Esophagus squamous epithelium (tissue), 5 donors: ENCODE measurements at regions of chr6 and their contacts with region 1.

Region 1: GRCh38 chr6:159013229-159013628 is 13.2 kb upstream of the RSPH3 start:
- DNase-seq: no peak
- H3K4me3 ChIP-seq: no peak overlapping the region
- H3K27ac ChIP-seq: no peak overlapping the region
- H3K4me1 ChIP-seq: peaks cover 0 to 14% (median 3%) of the 10 kb centered on the region in 3 donors
- H3K27me3 ChIP-seq: no peaks in the 10 kb centered on the region
- CTCF ChIP-seq: no peak
- POLR2A ChIP-seq: no peak

Region 2: DNA sequence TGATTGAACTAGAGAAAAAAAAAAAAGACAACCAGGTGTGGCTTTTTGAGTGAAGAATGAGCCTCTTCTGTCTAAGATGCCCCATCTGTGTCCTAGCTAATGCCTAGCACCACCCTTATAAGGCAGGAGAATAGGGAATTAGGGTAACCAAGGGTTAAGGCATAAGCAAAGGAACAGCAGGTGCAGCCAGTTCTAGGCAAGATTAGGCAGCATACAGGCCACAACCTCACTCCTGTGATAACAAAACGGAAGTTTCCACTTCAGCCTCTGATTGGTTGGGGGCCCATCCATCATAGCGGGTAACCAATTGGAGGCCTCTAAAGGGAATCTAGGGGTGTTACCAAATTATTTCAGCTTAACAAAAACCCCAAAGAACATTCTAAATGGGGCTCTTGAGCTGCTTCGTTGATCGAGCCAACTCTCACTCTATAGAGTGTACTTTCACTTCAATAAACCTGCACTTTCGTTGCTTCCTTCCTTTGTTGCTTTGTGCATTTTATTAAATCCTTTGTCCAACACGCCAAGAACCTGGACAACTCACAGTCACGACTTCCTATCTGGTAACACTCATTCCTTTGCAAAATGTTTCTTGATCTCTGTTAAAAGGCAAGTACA is 93.5 kb after region 1 on chr6:
- intact Hi-C with region 1: loop called (anchors 5 kb)
- DNase-seq: no peak
- H3K4me3 ChIP-seq: peak overlapping the region in 1 of 4 donors; percentile 9
- H3K27ac ChIP-seq: peak overlapping the region in 3 of 4 donors; percentile 6 to 59 (median 52)
- H3K4me1 ChIP-seq: peaks cover 0 to 49% (median 15%) of the 10 kb centered on the region in 3 donors
- H3K27me3 ChIP-seq: no peaks in the 10 kb centered on the region
- CTCF ChIP-seq: no peak
- POLR2A ChIP-seq: peak in 1 of 4 donors; percentile 31

Region 3: DNA sequence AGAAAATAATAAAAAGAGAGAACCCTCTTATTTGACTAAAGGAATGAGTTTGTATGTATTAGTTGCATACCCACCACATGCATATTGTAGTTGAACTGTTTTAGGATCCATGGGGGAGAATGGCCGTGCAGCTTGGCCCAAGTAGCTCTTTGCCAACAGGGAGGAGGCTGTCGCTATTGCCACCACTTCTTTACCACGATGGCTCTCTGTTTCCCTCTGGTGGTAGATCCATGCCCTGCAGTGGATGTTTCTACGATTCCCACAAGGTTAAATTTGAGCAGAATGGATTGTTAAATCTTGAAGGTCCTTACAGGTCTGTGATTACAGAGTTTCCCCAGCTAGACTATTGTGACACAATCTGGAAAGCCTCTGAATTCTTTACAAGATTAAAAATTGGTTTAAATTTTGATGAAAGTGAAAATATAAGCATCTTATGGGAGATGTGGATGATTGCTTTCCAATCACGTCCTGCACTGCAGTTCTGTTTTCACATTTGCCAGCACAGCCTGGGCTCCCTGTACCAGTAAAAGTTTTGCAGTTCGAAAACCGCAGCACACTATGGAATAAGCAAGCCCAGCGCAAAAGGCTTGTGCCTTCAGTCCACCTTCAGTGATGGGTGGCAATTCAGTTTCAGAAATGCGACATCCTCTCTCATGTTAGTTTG is 121.6 kb after region 1 on chr6:
- intact Hi-C with region 1: loop called (anchors 10 kb)
- DNase-seq: no peak
- H3K4me3 ChIP-seq: no peak overlapping the region
- H3K27ac ChIP-seq: no peak overlapping the region
- H3K4me1 ChIP-seq: no peaks in the 10 kb centered on the region
- H3K27me3 ChIP-seq: peaks cover 0 to 33% (median 0%) of the 10 kb centered on the region in 4 donors
- CTCF ChIP-seq: peak; percentile 88 to 96 (median 92)
- POLR2A ChIP-seq: no peak

Region 4: DNA sequence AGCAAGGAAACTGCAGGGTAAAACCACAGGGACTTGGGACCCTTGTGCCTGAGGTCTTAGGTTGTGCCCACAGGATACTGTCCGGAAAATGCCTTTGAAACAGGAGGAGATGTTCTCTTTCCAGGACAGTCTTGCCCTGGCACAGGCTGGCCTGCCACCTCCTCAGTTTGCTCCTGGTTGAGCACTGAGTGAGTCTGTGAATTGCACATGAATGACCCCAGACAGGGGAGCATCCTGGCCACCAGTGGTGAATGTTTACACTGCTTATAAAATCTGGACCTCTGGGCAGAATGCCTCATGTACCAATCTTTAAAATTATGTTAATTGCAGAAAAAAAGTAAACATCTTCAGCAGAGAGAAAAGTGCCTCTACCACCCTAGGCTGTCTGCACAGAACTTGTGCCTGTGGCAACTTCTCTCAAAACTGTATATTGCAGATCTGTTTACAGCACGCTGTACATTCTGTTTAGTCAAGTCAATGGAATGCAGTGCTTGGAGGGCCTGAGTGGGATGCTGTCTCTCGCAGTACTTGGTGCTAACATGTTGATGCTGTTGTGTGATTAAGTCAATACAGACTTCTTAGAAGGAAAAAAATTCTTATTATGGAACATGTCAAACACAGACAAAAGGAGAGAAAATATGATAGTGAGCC is 437.7 kb after region 1 on chr6:
- intact Hi-C with region 1: no loop called
- DNase-seq: no peak
- H3K4me3 ChIP-seq: no peak overlapping the region
- H3K27ac ChIP-seq: no peak overlapping the region
- H3K4me1 ChIP-seq: no peaks in the 10 kb centered on the region
- H3K27me3 ChIP-seq: peaks cover 0 to 6% (median 0%) of the 10 kb centered on the region in 4 donors
- CTCF ChIP-seq: no peak
- POLR2A ChIP-seq: no peak